ENCODE measurements at regions of chr1 and their contacts with region 1.

Region 1: DNA sequence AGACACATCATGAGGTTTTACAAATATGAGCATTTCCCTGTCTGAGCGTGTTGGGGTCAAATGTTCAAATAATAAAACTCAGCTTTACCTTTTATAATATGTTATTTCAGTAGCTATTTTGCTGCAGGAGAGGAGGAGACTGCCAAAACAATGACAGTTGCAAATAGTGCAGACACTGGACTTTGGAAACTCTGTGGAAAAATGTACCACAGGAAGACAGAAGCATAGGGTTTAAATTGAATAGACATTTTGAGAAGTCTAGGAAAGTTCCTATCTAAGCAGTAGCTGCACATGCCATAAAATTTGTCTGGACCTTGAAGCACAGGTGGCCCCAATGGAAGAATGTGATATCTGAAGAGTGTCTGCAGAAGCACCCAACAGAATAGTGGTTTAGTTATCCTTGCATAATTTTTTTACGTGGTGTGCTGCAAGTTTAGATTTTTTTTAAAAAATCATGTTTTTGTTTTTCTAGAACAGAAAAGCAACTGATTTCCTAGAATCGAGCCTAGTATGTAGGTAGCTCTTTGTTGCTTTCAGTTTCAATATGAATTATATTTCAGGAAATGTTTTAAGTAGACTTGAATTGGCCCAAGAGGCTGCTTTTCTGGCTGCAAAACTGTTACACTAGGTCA is 14.0 kb upstream of the GBP5 start:
- DNase-seq: peak; percentile 50
- ATAC-seq: peak; percentile 84
- H3K4me3 Mint-ChIP-seq: peak overlapping the region; percentile 31
- H3K27ac Mint-ChIP-seq: peak overlapping the region; percentile 88
- H3K4me1 Mint-ChIP-seq: peaks cover 82% of the 10 kb centered on the region
- H3K27me3 Mint-ChIP-seq: no peaks in the 10 kb centered on the region

Region 2: DNA sequence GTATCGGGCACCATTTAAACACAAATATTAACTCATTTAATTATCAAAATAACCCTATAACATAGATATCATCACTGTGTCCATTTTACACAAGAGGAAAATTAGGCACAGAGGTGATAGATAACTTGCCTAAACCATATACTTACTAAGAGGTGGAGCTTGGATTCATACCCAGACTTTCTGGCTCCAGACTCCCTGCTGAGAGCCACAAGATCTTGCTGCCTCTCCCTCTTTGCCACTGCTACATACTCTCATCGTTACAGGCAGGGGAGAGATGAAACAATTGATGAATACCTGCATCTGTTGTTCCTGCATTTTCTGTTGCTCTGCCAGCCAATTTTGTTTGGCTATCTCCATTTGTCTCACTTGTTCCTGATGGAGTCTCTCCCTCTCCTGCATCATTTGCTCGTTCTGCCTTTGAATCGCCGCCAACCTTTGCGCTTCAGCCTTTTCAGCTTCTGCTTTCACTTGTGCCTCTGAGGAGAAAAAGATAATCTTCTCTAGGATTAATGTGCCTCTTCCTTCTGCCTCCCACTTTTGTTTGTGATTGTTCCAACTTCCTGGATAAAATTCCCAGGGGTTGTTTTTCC is 24.6 kb before region 1 on chr1:
- CTCF ChIA-PET with region 1: interaction called, 3 read pairs
- POLR2A ChIA-PET with region 1: interaction called, 10 read pairs
- DNase-seq: no peak
- ATAC-seq: no peak
- H3K4me3 Mint-ChIP-seq: peak overlapping the region; percentile 65
- H3K27ac Mint-ChIP-seq: peak overlapping the region; percentile 40
- H3K4me1 Mint-ChIP-seq: peaks cover 79% of the 10 kb centered on the region
- H3K27me3 Mint-ChIP-seq: no peaks in the 10 kb centered on the region

Region 3: DNA sequence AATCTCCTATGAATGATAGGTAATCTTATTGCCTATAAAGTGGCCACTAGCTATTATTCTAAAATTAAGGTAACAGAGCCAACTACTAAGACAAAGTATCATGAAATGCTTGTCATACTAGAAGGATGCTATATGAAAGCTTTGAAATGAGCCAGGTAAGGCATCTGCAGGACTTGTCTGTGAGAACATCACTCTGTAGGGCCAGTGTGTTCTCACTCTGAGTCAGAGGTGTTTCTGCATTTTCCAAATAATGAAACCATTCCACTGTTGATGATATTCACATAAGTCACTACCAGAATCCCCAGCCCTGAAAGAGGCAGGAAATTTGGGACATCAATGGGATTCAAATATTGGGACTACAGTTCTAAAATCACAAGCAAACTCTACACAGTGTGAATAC is 11.8 kb after region 1 on chr1:
- CTCF ChIA-PET with region 1: interaction called, 13 read pairs
- POLR2A ChIA-PET with region 1: interaction called, 7 read pairs
- DNase-seq: no peak
- ATAC-seq: no peak
- H3K4me3 Mint-ChIP-seq: no peak overlapping the region
- H3K27ac Mint-ChIP-seq: no peak overlapping the region
- H3K4me1 Mint-ChIP-seq: peaks cover 61% of the 10 kb centered on the region
- H3K27me3 Mint-ChIP-seq: no peaks in the 10 kb centered on the region

Region 4: GRCh38 chr1:89310505-89310904 is 23.8 kb after region 1 on chr1:
- CTCF ChIA-PET with region 1: interaction called, 19 read pairs
- POLR2A ChIA-PET with region 1: interaction called, 26 read pairs
- DNase-seq: no peak
- ATAC-seq: peak; percentile 78
- H3K4me3 Mint-ChIP-seq: peak overlapping the region; percentile 60
- H3K27ac Mint-ChIP-seq: peak overlapping the region; percentile 93
- H3K4me1 Mint-ChIP-seq: peaks cover 57% of the 10 kb centered on the region
- H3K27me3 Mint-ChIP-seq: no peaks in the 10 kb centered on the region

Measured in activated CD8-positive, alpha-beta T cell treated with anti-CD3 and anti-CD28 coated beads, Interleukin-2, amount 10 ng/mL, durations not matched to agents 7 days and 5 days (primary cell).